H1 (cell line): ENCODE measurements at regions of chr15 and their contacts with region 1.

Region 1: GRCh38 chr15:63986751-63987341 is 59.4 kb downstream of the DAPK2 start:
- DNase-seq: no peak
- H3K4me3 ChIP-seq: no peak overlapping the region
- H3K27ac ChIP-seq: no peak overlapping the region
- H3K4me1 ChIP-seq: no peaks in the 10 kb centered on the region; a peak in 1 of 7 replicates
- H3K27me3 ChIP-seq: no peaks in the 10 kb centered on the region
- CTCF ChIP-seq: no peak
- EP300 ChIP-seq: no peak
- POLR2A ChIP-seq: no peak
- RAD21 ChIP-seq: no peak

Region 2: DNA sequence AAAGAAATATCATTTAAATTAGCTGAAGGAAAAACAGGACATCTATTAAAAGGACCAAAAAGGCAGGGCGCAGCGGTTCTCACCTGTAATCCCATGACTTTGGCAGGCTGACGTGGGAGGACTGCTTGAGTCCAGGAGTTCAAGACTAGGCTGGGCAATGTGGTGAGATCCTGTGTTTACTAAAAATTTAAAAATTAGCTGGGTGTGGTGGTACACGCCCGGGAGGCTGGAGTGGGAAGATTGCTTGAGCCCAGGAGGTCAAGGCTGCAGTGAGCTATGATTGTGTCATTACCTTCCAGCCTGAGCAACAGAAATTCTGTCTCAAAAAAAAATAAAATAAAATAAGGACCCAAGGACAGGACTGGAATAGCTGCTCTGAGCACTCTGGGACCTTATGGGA is 136.9 kb before region 1 on chr15:
- CTCF ChIA-PET with region 1: no interaction called
- POLR2A ChIA-PET with region 1: no interaction called
- DNase-seq: no peak
- H3K4me3 ChIP-seq: no peak overlapping the region
- H3K27ac ChIP-seq: no peak overlapping the region
- H3K4me1 ChIP-seq: no peaks in the 10 kb centered on the region
- H3K27me3 ChIP-seq: no peaks in the 10 kb centered on the region
- CTCF ChIP-seq: no peak
- EP300 ChIP-seq: no peak
- POLR2A ChIP-seq: no peak
- RAD21 ChIP-seq: no peak

Region 3: GRCh38 chr15:63939531-63940130 is 47.2 kb before region 1 on chr15:
- CTCF ChIA-PET with region 1: interaction called, 102 read pairs
- POLR2A ChIA-PET with region 1: no interaction called
- DNase-seq: peak in 1 of 2 experiments; percentile 39
- H3K4me3 ChIP-seq: no peak overlapping the region
- H3K27ac ChIP-seq: no peak overlapping the region
- H3K4me1 ChIP-seq: no peaks in the 10 kb centered on the region
- H3K27me3 ChIP-seq: no peaks in the 10 kb centered on the region
- CTCF ChIP-seq: no peak
- EP300 ChIP-seq: no peak
- POLR2A ChIP-seq: no peak
- RAD21 ChIP-seq: no peak

Region 4: GRCh38 chr15:63970621-63971426 is 16.0 kb before region 1 on chr15:
- CTCF ChIA-PET with region 1: interaction called, 13 read pairs
- POLR2A ChIA-PET with region 1: interaction called, 3 read pairs
- DNase-seq: peak in 1 of 2 experiments; percentile 23
- H3K4me3 ChIP-seq: no peak overlapping the region
- H3K27ac ChIP-seq: no peak overlapping the region
- H3K4me1 ChIP-seq: peaks cover 7 to 28% (median 20%) of the 10 kb centered on the region in 4 experiments
- H3K27me3 ChIP-seq: peaks cover 0 to 2% (median 0%) of the 10 kb centered on the region in 4 experiments; a peak in 1 of 7 replicates
- CTCF ChIP-seq: no peak
- EP300 ChIP-seq: no peak
- POLR2A ChIP-seq: no peak
- RAD21 ChIP-seq: no peak

Region 5: DNA sequence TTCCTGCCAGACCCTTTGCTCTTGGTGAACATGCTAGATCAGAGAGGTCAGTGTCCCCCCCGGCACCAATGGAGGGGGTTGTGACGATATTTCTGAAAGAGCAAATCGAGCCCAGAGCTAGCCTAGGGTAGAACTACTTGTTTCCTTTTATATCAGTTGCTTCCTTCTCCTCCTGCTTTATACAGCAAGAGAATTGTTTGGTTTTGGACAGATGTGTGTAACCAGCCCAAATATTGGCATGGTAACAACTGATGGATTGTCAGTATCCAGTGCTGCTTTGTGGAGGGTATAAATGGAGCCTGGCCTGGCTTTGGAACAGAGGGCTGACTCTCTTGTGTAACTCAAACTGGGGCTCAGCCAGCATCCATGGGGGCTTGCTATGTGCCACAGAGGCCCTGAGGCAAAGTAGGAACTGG is 136.1 kb after region 1 on chr15:
- CTCF ChIA-PET with region 1: no interaction called
- POLR2A ChIA-PET with region 1: no interaction called
- DNase-seq: no peak
- H3K4me3 ChIP-seq: no peak overlapping the region
- H3K27ac ChIP-seq: no peak overlapping the region
- H3K4me1 ChIP-seq: no peaks in the 10 kb centered on the region
- H3K27me3 ChIP-seq: no peaks in the 10 kb centered on the region
- CTCF ChIP-seq: no peak
- EP300 ChIP-seq: no peak
- POLR2A ChIP-seq: no peak
- RAD21 ChIP-seq: no peak